Activated CD4-positive, alpha-beta memory T cell treated with anti-CD3 and anti-CD28 coated beads for 36 hours (primary cell): ENCODE measurements at regions of chr3 and their contacts with region 1.

Region 1: GRCh38 chr3:154235330-154235729 is 89.0 kb downstream of the DHX36 start:
- DNase-seq: no peak
- H3K4me3 Mint-ChIP-seq: no peak overlapping the region
- H3K27ac Mint-ChIP-seq: no peak overlapping the region
- H3K4me1 Mint-ChIP-seq: peaks cover 13% of the 10 kb centered on the region
- H3K27me3 Mint-ChIP-seq: peaks cover 24% of the 10 kb centered on the region

Region 2: DNA sequence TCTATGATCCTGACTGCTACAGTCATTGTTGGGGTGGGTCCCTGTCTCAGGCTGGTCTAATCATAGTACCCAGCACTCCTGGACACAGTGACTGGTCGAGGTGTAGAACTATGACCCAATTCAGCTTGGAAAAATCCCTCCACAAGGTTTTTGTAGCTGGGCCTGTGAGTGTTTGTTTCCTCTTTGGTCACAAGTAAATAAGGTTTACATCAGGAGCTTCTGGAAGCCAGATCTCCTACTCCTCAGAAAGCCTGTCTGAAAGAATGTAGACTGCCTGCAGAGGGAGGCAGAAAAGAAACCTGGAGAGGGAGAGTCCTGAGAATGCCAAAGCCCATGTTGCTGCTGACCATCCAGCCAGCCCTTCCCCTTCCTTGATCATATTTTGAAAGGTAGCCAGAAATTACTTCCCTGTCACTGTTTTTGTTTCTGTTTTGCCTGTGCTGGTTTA is 950.1 kb before region 1 on chr3:
- CTCF ChIA-PET with region 1: no interaction called
- POLR2A ChIA-PET with region 1: no interaction called
- intact Hi-C with region 1: loop called (anchors 5 kb)
- DNase-seq: no peak
- H3K4me3 Mint-ChIP-seq: no peak overlapping the region
- H3K27ac Mint-ChIP-seq: peak overlapping the region; percentile 60
- H3K4me1 Mint-ChIP-seq: peaks cover 48% of the 10 kb centered on the region
- H3K27me3 Mint-ChIP-seq: no peaks in the 10 kb centered on the region

Region 3: GRCh38 chr3:154089452-154090420 is 145.6 kb before region 1 on chr3:
- CTCF ChIA-PET with region 1: no interaction called
- POLR2A ChIA-PET with region 1: no interaction called
- intact Hi-C with region 1: no loop called
- DNase-seq: no peak
- H3K4me3 Mint-ChIP-seq: no peak overlapping the region
- H3K27ac Mint-ChIP-seq: no peak overlapping the region
- H3K4me1 Mint-ChIP-seq: no peaks in the 10 kb centered on the region
- H3K27me3 Mint-ChIP-seq: peaks cover 9% of the 10 kb centered on the region

Region 4: DNA sequence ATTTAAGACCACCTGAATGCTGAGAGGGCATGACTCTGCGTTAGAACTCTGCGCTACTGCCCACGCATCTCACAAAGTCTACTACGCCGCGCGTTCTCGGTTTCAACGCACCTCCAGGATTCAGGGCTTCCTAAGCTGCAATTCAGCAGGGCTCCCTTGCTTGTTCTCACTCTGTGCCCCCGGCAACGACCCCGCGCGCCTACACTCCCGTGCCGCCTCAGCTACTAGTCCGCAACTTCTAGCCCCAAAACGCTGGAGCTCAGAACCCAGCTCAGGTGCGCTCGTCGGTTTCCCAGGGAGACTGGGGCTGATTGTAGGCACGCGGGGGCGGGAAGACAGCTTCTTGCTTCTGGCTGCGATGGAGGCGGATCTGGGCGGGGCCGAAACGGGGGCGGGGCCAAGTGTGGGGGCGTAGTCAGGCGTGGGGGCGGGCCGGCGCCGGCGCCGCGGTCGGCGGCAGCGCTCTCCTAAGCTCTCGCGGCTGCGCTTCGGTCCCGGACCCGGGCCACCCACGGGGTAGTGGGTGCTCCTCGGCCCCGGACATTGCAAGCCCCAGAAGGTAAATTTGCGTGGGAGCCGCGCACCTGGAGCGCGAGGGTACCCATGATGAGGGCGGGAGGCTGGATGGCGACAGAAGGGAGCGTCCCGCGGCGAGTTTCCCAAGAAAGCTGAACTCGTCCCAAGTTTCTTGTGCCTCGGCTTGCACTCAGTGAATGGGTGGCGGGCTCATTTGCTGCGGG is 114.2 kb before region 1 on chr3 and contains the start of gene ARHGEF26:
- CTCF ChIA-PET with region 1: no interaction called
- POLR2A ChIA-PET with region 1: no interaction called
- intact Hi-C with region 1: loop called (anchors 1 kb)
- DNase-seq: peak; percentile 86
- H3K4me3 Mint-ChIP-seq: peak within 1 kb of the TSS; percentile 79
- H3K27ac Mint-ChIP-seq: no peak within 1 kb of the TSS
- H3K4me1 Mint-ChIP-seq: peaks cover 22% of the 10 kb centered on the region
- H3K27me3 Mint-ChIP-seq: peaks cover 61% of the 10 kb centered on the region
- total RNA-seq, gene ARHGEF26: 0.24 to 0.34 TPM

Region 5: GRCh38 chr3:154307363-154307762 is 72.0 kb after region 1 on chr3:
- CTCF ChIA-PET with region 1: no interaction called
- POLR2A ChIA-PET with region 1: no interaction called
- intact Hi-C with region 1: loop called (anchors 1 kb)
- DNase-seq: no peak
- H3K4me3 Mint-ChIP-seq: no peak overlapping the region
- H3K27ac Mint-ChIP-seq: peak overlapping the region; percentile 26
- H3K4me1 Mint-ChIP-seq: peaks cover 20% of the 10 kb centered on the region
- H3K27me3 Mint-ChIP-seq: no peaks in the 10 kb centered on the region